Activated CD8-positive, alpha-beta memory T cell treated with anti-CD3 and anti-CD28 coated beads, Interleukin-2, amount 10 ng/mL, durations not matched to agents 7 days and 5 days (primary cell): ENCODE measurements at regions of chr11 and their contacts with region 1.

Region 1: DNA sequence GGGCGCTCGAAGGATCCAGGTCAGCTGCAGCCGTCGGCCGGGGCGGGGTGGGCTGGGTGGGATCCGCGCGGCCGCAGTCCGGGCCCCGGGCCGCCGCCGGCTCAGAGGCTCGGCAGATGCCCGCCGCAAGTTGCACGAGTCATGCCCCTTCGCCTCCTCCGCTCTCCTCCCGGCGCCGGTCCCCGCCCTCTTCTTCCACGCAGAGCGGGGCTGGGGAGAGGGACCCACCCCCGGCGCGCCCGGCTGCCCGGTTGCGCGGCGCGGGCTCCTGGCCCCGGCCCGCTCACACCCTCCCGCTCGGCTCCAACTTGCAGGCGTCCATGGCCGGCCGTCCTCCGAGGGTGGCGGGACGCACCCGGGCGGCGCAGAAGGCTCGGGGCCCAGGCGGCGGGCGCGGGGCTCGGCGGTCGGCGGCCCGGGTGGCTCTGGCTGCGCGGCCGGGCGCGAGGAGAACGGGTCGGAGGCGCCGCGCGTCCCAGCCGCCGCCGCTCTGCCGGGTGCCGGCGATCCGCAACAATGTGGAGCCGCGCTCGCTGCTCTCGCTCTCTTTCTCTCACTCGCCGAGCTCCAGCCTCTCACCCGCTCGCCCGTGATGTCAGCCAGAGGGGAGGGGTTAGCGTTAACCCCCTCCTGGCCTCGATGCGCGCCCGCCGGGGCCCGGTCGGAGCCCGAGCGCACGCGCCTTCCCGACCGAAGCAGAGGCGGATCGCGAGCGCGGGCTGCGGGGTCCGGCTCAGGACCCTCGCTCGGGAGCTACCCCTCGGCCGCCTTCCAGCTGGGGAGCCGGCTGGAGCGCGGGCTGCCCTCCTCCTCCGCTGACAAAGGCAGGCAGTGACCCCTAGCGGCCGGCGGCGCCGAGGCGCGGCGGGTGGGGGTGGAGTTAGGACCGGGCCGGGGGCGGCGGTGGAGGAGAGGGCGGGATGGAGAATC is at the start of gene NECTIN1:
- DNase-seq: peak; percentile 85
- ATAC-seq: peak; percentile 91
- H3K4me3 Mint-ChIP-seq: peak within 1 kb of the TSS; percentile 65
- H3K27ac Mint-ChIP-seq: no peak within 1 kb of the TSS
- H3K4me1 Mint-ChIP-seq: peaks cover 12% of the 10 kb centered on the region
- H3K27me3 Mint-ChIP-seq: peaks cover 66% of the 10 kb centered on the region
- total RNA-seq, gene NECTIN1: 0.53 to 0.98 TPM

Region 2: DNA sequence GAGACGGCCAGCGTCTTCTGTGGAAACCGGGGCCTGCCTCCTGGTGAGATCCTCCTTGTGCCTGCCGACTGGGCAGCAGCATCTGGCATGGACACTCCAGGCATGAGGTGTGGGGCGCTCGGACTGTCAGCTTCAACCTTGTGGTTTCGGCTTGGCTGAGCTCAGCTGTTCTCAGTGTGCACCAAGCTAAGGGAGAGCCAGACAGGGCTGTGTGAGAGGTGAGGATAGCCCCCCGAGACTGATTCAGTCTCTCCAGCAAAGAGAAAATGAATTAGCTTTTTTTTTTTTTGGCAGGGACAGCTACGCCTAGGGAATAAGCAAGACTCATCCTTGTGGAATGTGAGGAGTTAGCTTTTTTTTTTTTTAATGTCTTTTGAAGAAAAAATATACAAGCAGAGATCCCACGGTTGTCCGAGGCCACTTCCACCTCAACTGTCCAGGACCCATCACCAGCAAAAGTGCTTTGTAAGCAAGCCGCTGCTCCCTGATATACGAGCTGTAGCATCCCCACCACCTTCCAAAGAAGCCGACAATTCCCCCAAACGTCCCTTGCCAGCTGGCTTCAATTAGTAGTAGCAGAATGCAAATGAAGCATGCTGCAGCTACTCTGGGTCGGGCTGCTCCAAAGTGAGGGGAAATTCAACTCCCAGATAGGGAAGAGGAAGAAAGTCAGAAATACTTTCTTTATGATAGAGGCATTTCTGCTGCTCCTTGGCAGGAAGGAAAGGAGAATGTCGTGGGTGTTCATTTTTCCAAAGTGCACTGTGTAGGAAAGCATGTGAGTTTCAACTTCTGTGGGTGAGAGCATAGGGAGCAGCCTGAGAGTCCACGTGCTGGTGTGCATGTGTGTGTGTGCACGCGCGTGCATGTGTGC is 296.2 kb before region 1 on chr11:
- CTCF ChIA-PET with region 1: no interaction called
- DNase-seq: no peak
- ATAC-seq: no peak
- H3K4me3 Mint-ChIP-seq: no peak overlapping the region
- H3K27ac Mint-ChIP-seq: no peak overlapping the region
- H3K4me1 Mint-ChIP-seq: no peaks in the 10 kb centered on the region
- H3K27me3 Mint-ChIP-seq: peaks cover 47% of the 10 kb centered on the region

Region 3: DNA sequence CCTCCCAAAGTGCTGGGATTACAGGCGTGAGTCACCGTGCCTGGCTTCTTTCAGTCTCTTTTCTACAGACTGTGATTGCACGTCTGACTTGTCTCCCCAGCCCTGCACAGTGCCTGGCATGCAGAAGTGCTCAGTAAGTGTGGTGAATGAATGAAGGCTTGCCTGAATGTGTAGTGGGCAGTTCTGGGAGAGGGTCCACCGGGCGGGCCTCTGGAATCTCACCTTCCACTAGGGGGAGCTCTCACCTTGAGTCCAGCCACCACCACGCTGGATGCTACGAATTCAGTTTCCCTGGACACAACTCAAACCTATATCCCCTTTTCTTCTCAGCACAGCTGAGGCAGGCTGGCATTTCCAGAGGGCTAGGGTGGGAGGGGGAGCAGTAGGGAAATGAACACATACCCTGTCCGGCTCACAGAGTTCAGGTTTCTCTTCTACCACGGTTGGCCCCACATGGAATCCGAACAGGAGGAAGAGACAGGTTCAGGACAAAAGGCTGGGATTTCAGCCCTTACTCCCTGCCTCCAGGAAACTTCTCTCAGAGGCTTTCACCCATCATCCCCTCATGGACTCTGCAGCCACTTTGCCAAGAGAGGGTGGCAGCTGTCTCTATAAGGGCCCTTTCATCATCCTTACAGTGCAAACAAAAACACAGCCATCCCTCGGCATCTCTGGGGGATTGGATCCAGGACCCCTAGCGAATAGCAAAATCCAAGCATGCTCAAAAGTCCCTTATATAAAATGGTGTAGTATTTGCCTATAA is 86.8 kb before region 1 on chr11:
- CTCF ChIA-PET with region 1: interaction called, 29 read pairs
- DNase-seq: no peak
- ATAC-seq: no peak
- H3K4me3 Mint-ChIP-seq: no peak overlapping the region
- H3K27ac Mint-ChIP-seq: no peak overlapping the region
- H3K4me1 Mint-ChIP-seq: no peaks in the 10 kb centered on the region
- H3K27me3 Mint-ChIP-seq: no peaks in the 10 kb centered on the region

Region 4: GRCh38 chr11:119673759-119674336 is 55.1 kb before region 1 on chr11:
- CTCF ChIA-PET with region 1: interaction called, 83 read pairs
- DNase-seq: peak; percentile 71
- ATAC-seq: peak; percentile 85
- H3K4me3 Mint-ChIP-seq: no peak overlapping the region
- H3K27ac Mint-ChIP-seq: peak overlapping the region; percentile 48
- H3K4me1 Mint-ChIP-seq: peaks cover 16% of the 10 kb centered on the region
- H3K27me3 Mint-ChIP-seq: no peaks in the 10 kb centered on the region

Region 5: DNA sequence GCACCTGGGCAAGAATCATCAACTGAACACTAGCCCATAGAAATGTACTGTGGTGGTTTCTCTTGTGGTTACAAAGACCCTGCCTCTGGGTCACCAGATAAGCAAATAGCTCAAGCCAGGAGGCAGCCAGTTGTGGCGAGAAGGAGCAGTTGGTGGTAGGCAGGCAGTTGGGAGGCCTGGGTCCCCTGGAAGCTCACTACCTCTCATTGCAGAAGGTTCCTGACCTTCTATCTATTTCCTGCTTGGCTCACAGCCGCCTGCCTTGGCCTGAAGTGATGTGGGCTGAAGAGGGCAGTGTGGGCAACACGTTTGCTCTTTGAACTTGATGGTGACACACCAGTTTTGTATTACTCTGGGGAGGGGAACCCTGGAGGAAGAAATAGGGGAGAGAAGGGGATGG is 34.6 kb before region 1 on chr11:
- CTCF ChIA-PET with region 1: interaction called, 55 read pairs
- DNase-seq: no peak
- ATAC-seq: no peak
- H3K4me3 Mint-ChIP-seq: no peak overlapping the region
- H3K27ac Mint-ChIP-seq: peak overlapping the region; percentile 25
- H3K4me1 Mint-ChIP-seq: peaks cover 40% of the 10 kb centered on the region
- H3K27me3 Mint-ChIP-seq: peaks cover 4% of the 10 kb centered on the region

Region 6: DNA sequence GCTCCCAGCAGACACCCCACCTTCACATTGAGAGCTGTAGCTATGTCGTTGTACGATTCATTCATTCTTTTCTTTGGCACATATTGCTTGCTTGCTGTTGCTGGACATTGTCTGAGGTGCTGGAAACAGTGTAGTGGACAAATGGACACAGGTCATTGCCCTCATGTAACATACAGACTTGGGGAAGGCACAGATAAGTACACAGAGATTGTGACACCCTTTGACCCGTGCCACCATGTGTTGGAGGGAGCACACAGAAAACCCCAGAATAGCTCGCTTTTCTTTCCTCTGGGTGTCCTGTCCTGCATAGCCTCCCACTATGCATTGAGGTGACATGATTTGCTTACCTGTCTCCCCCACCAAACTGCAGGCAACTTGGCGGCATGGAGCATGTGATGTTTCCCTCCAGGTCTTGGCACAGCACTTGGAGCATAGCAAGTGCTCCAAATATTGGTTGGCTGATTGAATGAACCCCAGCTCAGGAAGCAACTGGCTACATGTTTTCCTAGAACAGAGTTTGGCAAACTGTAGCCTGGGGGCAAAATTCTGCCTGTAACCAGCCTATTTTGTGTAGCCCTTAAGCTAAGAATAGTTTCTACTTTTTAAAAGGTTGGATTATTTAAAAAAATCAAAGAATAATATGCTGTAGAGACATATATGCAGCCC is 31.0 kb after region 1 on chr11:
- CTCF ChIA-PET with region 1: no interaction called
- DNase-seq: no peak
- ATAC-seq: no peak
- H3K4me3 Mint-ChIP-seq: no peak overlapping the region
- H3K27ac Mint-ChIP-seq: no peak overlapping the region
- H3K4me1 Mint-ChIP-seq: no peaks in the 10 kb centered on the region
- H3K27me3 Mint-ChIP-seq: peaks cover 11% of the 10 kb centered on the region

Region 7: GRCh38 chr11:120108154-120108865 is 379.4 kb after region 1 on chr11:
- CTCF ChIA-PET with region 1: interaction called, 12 read pairs
- DNase-seq: peak; percentile 63
- ATAC-seq: peak; percentile 82
- H3K4me3 Mint-ChIP-seq: no peak overlapping the region
- H3K27ac Mint-ChIP-seq: no peak overlapping the region
- H3K4me1 Mint-ChIP-seq: no peaks in the 10 kb centered on the region
- H3K27me3 Mint-ChIP-seq: peaks cover 8% of the 10 kb centered on the region

Region 8: GRCh38 chr11:120272303-120272702 is 543.4 kb after region 1 on chr11:
- CTCF ChIA-PET with region 1: no interaction called
- DNase-seq: no peak
- ATAC-seq: no peak
- H3K4me3 Mint-ChIP-seq: no peak overlapping the region
- H3K27ac Mint-ChIP-seq: no peak overlapping the region
- H3K4me1 Mint-ChIP-seq: no peaks in the 10 kb centered on the region
- H3K27me3 Mint-ChIP-seq: peaks cover 49% of the 10 kb centered on the region